ENCODE measurements at regions of chr5 and their contacts with region 1.

Region 1: DNA sequence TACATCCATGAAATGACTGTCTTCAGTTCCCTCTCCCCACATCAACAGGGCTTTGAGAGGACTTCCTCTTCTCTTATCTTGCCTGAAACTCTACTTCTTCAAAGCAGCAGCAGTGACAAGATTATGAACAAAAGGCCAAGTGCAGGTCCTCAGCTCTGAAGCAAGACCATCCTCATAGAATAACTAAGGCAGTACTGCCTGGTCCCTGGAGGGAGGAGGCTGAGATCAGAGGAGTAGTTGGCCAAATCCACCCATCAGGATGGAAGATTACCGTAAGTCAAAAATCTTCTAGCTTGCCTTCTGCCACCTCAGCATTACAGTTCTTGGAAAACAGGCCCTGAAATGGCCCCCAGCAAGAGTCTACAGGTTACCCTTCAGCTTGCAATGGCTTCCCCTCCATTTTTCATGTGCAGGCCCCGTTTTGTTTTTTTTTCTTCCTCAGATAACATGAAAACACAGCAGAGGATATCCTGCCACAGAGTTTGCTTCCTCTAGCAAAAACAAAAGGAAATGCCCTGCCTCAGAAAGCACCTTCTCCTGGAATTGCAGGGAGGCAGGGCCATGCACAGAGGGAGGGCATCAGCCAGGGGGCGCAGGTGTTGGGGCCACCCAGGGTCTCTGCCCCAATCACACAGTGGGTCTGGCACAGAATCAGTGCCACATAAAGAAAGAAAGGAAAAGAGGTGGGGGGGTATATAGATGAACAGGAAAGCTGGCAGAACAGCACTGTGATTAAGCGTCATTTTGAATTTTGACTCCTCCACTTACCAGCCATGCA is 40.0 kb downstream of the KLHL3 start:
- DNase-seq: peak; percentile 22 to 27
- ATAC-seq: peak in 7 of 8 donors; percentile 31 to 82 (median 61)
- H3K4me3 ChIP-seq: no peak overlapping the region
- H3K27ac ChIP-seq: peak overlapping the region; percentile 33 to 87 (median 64)
- H3K4me1 ChIP-seq: peaks cover 21 to 64% (median 49%) of the 10 kb centered on the region in 9 donors
- H3K27me3 ChIP-seq: no peaks in the 10 kb centered on the region
- CTCF ChIP-seq: peak in 7 of 9 donors; percentile 23 to 63 (median 46)

Region 2: GRCh38 chr5:137665678-137666460 is 30.0 kb before region 1 on chr5:
- intact Hi-C with region 1: loop called in 1 of 10 experiments (anchors 5 kb)
- DNase-seq: peak in 1 of 2 donors; percentile 12
- ATAC-seq: peak; percentile 85 to 97 (median 92)
- H3K4me3 ChIP-seq: no peak overlapping the region
- H3K27ac ChIP-seq: peak overlapping the region; percentile 29 to 82 (median 68)
- H3K4me1 ChIP-seq: peaks cover 0 to 28% (median 24%) of the 10 kb centered on the region in 9 donors
- H3K27me3 ChIP-seq: no peaks in the 10 kb centered on the region
- CTCF ChIP-seq: no peak

Measured in heart right ventricle (tissue), 16 donors.